OCI-LY7 (cell line): ENCODE measurements at regions of chr7 and their contacts with region 1.

Region 1: DNA sequence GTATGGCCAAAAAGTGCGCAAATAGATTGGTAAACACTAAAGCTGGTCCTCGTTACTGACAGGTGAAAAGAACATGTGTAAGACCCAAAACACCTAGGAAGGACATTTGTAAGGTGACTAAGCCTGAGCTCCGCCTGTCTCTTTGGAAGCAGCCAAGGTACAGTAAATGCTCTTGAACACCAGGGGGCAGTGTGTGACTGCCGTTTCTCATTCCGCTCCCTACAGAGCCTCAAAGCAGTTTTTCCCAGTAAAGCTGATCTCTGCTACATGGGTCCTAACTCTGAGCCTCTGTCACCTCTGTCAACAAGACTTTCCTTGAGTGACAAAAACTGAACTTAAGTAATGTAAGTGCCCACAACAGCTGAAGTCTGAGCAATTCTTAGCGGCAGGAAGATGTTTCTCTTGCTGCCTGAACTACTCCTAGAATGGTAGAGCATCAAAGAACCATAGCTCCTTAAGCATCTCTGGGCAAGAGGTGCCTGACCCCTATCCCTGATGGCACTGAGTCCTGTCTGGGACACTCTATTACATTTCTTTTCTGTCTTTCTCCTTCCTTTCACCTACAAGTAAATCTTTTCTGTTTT is 238.0 kb upstream of the INHBA start:
- DNase-seq: peak; percentile 62
- H3K4me3 ChIP-seq: no peak overlapping the region
- H3K27ac ChIP-seq: no peak overlapping the region
- H3K4me1 ChIP-seq: no peaks in the 10 kb centered on the region
- CTCF ChIP-seq: peak; percentile 91

Region 2: GRCh38 chr7:42843205-42843800 is 902.5 kb after region 1 on chr7:
- CTCF ChIA-PET with region 1: interaction called, 3 read pairs
- POLR2A ChIA-PET with region 1: no interaction called
- intact Hi-C with region 1: loop called (anchors 10 kb)
- DNase-seq: peak; percentile 28
- H3K4me3 ChIP-seq: no peak overlapping the region
- H3K27ac ChIP-seq: no peak overlapping the region
- H3K4me1 ChIP-seq: no peaks in the 10 kb centered on the region
- CTCF ChIP-seq: peak; percentile 63

Region 3: DNA sequence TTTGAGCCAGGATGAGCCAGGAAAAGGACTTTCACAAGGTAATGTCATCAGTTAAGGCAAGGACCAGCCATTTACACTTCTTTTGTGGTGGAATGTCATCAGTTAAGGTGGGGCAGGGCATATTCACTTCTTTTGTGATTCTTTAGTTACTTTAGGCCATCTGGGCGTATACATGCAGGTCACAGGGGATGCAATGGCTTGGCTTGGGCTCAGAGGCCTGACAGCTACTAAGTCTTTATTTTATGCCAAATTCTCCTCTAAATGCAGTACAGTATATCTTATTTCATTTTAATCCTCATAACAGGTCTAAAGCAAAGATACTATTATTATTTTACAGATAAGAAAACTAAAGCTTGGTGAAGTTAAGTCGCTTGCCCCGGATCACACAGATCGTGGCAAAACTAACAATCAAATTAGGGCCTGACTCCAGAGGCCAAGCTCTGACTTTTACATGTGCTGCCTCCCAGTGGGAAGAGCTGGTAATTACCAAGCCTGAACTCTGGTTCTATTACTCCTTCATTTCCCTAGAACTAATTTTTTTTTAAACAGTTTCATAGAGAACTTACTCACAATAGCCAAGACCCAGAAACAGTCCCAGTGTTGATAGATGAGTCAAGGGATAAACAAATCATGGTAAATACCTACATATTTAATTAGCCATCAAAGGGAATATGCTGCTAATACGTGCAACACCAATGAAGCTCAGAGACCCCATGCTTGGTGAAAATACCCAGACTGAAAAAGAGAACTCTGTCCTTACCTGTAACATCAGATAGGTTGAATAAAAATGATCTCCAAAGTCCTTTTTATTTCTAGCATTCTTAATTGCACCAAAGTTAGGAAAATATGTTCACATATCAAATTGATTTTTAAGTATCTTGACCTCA is 935.6 kb after region 1 on chr7:
- CTCF ChIA-PET with region 1: no interaction called
- POLR2A ChIA-PET with region 1: no interaction called
- intact Hi-C with region 1: loop called (anchors 2 kb)
- DNase-seq: peak; percentile 71
- H3K4me3 ChIP-seq: no peak overlapping the region
- H3K27ac ChIP-seq: no peak overlapping the region
- H3K4me1 ChIP-seq: peaks cover 4% of the 10 kb centered on the region
- CTCF ChIP-seq: peak; percentile 90

Region 4: DNA sequence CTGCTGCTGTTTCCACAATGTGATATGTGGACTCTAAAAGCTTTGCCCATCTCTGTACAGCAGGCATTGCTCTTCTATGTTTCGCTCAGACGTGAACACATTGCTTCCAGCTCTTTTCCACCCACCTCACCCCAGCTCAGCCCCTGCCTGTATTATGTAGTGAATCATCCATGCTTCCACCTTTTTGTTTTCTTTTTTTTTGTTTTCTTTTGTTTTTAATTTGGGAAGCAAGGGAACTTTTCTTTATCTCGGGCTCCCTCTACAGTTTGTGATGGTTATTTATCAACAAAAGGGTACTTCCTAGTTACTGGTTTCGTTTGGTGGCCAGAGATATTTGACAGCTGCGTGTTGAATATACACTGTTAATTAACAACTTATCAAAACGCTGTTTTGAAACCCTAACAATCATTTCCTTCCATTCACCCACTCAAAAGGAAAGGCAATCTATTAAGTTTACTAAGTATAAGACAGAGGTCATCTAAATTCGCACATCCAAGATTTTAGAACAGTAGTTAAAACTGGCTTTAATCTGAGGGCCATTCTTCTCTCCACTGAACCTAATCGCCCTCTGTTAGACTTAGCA is 1514.2 kb after region 1 on chr7:
- CTCF ChIA-PET with region 1: no interaction called
- POLR2A ChIA-PET with region 1: no interaction called
- intact Hi-C with region 1: loop called (anchors 10 kb)
- DNase-seq: peak; percentile 46
- H3K4me3 ChIP-seq: no peak overlapping the region
- H3K27ac ChIP-seq: no peak overlapping the region
- H3K4me1 ChIP-seq: no peaks in the 10 kb centered on the region
- CTCF ChIP-seq: peak; percentile 82